Activated CD4-positive, alpha-beta memory T cell treated with anti-CD3 and anti-CD28 coated beads for 36 hours (primary cell): ENCODE measurements at regions of chr10 and their contacts with region 1.

Region 1: DNA sequence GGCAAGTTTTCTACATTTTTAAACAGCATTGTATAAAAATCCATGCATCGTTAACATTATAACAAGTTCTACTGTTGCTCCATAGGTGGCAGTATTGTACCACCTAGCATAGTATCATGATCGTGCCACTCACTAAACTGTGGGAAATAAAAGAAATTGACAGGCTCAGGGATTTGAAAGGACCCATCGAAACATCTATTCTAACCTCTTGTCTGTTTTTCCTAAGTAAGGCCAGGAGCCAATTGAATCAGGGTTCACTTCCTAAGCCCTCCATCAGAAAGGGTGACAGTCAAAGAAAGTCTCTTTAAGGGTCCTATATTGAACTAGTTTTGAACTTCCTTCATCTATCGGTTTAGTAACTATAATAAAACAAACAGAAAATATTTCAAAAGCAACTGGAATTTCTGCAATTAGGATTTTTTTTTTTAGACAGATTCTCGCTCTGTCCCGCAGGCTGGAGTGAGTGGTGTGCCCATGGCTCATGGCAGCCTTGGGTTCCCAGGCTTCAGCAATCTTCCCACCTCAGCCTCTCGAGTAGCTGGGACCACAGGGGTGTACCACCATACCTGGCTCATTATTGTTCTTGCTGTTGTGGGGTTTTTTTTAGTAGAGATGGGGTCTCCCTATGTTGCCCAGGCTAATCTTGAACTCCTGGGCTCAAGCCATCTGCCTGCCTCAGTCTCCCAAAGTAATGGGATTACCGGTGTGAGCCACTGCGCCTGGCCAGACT is 9.4 kb downstream of the HACD1 start:
- DNase-seq: no peak
- H3K4me3 Mint-ChIP-seq: no peak overlapping the region
- H3K27ac Mint-ChIP-seq: no peak overlapping the region
- H3K4me1 Mint-ChIP-seq: no peaks in the 10 kb centered on the region
- H3K27me3 Mint-ChIP-seq: no peaks in the 10 kb centered on the region

Region 2: DNA sequence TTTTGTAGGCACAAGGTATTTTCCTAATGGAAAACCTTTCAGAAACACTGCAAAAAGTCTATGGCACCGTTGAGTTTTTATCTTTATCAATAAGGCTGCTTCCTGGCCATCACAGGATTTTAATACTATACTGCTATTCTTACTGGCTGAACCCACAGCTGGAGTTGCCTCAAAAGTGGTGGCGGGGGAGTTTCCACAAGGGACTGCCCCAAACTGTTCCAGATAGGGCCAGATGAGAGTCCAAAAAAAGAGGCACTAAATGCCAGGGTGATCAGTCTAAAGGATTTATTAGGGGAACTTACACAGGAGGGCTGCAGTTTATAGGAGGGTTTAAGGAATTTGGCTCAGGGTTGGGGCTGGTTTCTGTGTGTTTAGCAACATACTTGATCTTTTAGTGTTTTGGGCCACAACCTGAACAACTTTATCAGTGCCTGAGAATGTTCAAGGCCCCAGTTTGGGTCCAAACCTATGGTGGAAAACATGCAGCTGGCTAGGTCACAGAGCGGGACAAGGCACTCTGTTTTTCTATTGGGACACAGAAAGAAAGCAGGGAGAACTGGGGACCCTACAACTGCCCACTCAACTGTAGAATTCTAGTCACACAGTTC is 77.6 kb after region 1 on chr10:
- CTCF ChIA-PET with region 1: no interaction called
- POLR2A ChIA-PET with region 1: no interaction called
- intact Hi-C with region 1: no loop called
- DNase-seq: peak; percentile 75
- H3K4me3 Mint-ChIP-seq: no peak overlapping the region
- H3K27ac Mint-ChIP-seq: peak overlapping the region; percentile 57
- H3K4me1 Mint-ChIP-seq: peaks cover 37% of the 10 kb centered on the region
- H3K27me3 Mint-ChIP-seq: no peaks in the 10 kb centered on the region

Region 3: DNA sequence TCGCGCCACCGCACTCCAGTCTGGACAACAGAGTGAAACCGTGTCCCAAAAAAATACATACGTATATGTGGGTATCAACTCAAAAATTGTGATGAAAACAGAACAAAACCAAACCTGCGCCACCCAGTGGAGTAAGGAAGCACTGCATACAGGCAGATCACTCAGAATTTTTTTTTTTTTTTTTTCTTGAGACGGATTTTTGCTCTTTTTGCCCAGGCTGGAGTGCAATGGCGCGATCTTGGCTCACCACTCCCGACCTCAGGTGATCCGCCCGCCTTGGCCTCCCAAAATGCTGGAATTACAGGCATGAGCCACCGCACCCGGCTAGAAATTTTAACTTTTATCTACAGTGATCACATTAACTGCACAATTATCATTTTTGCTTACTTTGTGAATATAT is 135.2 kb after region 1 on chr10:
- CTCF ChIA-PET with region 1: interaction called, 24 read pairs
- POLR2A ChIA-PET with region 1: no interaction called
- intact Hi-C with region 1: loop called (anchors 1 kb)
- DNase-seq: peak; percentile 77
- H3K4me3 Mint-ChIP-seq: no peak overlapping the region
- H3K27ac Mint-ChIP-seq: no peak overlapping the region
- H3K4me1 Mint-ChIP-seq: peaks cover 6% of the 10 kb centered on the region
- H3K27me3 Mint-ChIP-seq: no peaks in the 10 kb centered on the region

Region 4: GRCh38 chr10:17872191-17873091 is 264.7 kb after region 1 on chr10:
- CTCF ChIA-PET with region 1: interaction called, 5 read pairs
- POLR2A ChIA-PET with region 1: no interaction called
- intact Hi-C with region 1: loop called (anchors 2 kb)
- DNase-seq: no peak
- H3K4me3 Mint-ChIP-seq: no peak overlapping the region
- H3K27ac Mint-ChIP-seq: no peak overlapping the region
- H3K4me1 Mint-ChIP-seq: no peaks in the 10 kb centered on the region
- H3K27me3 Mint-ChIP-seq: no peaks in the 10 kb centered on the region

Region 5: DNA sequence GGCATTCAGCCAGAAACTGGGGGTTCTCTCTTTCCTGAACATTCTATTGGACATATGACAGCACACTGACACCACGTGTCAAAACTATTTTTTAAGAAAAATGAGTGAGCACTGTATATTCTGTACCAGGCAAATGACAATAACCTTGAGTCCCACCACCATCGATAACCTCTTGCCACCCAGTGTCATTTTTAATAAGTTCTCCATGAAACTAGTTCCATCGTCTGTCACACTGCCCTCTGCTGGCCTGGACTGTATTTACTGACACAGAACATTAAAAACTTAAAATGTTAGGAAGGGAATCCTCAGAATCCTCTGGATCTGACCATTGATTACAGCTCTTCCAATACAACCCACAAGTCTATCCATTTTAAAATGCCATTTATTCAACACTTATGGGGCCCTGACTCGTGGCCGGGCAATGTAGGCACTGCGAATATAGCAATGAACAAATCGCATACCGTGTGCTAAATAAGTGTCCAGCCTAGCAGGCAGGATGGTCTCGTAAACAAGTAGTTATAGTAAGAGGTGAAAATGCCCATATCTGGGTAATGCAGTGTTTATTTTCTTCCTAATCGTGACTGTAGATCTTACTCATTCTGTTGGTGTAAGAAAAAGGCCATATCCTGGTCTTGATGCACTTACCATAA is 496.6 kb after region 1 on chr10:
- CTCF ChIA-PET with region 1: no interaction called
- POLR2A ChIA-PET with region 1: no interaction called
- intact Hi-C with region 1: loop called (anchors 1 kb)
- DNase-seq: peak; percentile 42
- H3K4me3 Mint-ChIP-seq: no peak overlapping the region
- H3K27ac Mint-ChIP-seq: no peak overlapping the region
- H3K4me1 Mint-ChIP-seq: no peaks in the 10 kb centered on the region
- H3K27me3 Mint-ChIP-seq: no peaks in the 10 kb centered on the region

Region 6: DNA sequence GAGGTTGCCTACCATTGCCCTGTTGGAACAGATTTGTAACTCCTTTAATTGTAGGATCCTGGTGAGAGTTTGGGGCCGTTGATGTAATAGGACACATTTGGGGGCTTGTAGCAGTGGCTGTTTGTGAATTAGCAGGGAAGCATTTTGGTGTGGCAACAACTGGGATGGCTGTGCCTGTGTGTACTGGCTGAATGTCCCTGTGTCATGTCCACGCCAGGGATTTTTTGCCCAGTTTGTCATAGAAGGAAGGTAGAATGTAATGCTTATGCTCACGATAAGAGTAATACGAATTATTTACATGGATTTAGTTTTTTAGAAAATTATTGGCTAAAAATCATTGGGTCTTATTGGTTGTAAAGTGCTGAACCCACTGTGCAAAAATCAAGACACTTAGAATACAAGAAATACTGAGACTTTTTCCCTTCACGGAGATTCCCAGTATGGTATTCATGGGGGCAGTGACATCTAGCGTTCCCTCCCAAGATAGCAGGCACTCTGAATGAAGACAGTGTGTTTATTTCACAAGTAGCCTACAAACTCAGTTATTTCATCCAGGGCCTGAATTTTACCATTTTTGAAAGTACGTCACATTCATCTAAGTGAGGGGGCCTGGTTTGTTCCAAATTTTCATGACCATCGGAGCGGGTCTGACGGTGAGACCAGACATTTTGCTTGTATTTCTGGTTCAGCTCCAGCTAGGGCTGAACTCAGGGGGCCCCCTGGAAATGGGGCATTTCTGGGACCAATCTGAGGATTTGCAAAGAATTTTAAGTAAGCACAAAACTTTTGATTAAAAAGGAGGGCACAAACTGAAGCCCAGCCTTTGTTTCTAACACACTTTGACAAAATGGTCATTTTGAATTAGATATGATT is 607.2 kb after region 1 on chr10:
- CTCF ChIA-PET with region 1: no interaction called
- POLR2A ChIA-PET with region 1: no interaction called
- intact Hi-C with region 1: loop called (anchors 5 kb)
- DNase-seq: peak; percentile 35
- H3K4me3 Mint-ChIP-seq: no peak overlapping the region
- H3K27ac Mint-ChIP-seq: no peak overlapping the region
- H3K4me1 Mint-ChIP-seq: no peaks in the 10 kb centered on the region
- H3K27me3 Mint-ChIP-seq: peaks cover 6% of the 10 kb centered on the region